ENCODE measurements at regions of chr7 and their contacts with region 1.

Region 1: DNA sequence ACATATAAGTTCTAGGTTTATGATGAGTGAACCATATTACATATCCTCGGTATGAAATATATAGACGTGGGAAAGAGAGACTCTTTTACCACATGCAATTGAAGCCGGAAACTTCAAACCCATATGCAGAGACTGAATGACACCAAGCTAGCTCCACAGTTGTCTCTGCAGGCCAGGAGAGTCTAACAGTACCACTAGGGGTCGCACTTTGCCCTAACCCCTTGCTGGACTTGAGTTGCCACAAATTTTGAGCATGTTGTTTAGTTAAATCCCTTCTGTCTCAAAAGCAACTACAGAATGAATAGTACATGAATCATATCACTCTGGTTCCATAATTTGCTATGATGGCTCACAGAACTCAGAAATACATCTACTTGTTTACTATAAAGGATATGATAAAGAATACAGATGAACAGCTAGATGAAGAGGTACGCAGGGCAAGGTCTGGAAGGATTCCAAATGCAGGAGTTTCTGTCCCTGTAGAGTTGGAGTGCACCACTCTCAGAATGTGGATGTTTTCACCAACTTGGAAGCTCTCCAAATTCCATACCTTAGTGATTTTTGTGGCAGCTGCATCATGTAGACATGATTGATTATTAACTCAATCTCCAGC is 112.4 kb upstream of the YAE1 start:
- DNase-seq: peak; percentile 27 to 73
- ATAC-seq: peak; percentile 65 to 80 (median 67)
- H3K4me3 ChIP-seq: no peak overlapping the region
- H3K4me3 Mint-ChIP-seq: no peak overlapping the region
- H3K27ac ChIP-seq: no peak overlapping the region
- H3K27ac Mint-ChIP-seq: no peak overlapping the region
- H3K4me1 ChIP-seq: no peaks in the 10 kb centered on the region
- H3K4me1 Mint-ChIP-seq: no peaks in the 10 kb centered on the region
- H3K27me3 ChIP-seq: no peaks in the 10 kb centered on the region
- H3K27me3 Mint-ChIP-seq: peaks cover 4 to 10% of the 10 kb centered on the region in 2 donors
- CTCF ChIP-seq: peak; percentile 69

Region 2: GRCh38 chr7:39517240-39517639 is 63.4 kb after region 1 on chr7:
- intact Hi-C with region 1: loop called (anchors 1 kb)
- DNase-seq: no peak
- ATAC-seq: no peak
- H3K4me3 ChIP-seq: no peak overlapping the region
- H3K4me3 Mint-ChIP-seq: no peak overlapping the region
- H3K27ac ChIP-seq: no peak overlapping the region
- H3K27ac Mint-ChIP-seq: no peak overlapping the region
- H3K4me1 ChIP-seq: no peaks in the 10 kb centered on the region
- H3K4me1 Mint-ChIP-seq: peaks cover 0 to 5% of the 10 kb centered on the region in 2 donors
- H3K27me3 ChIP-seq: no peaks in the 10 kb centered on the region
- H3K27me3 Mint-ChIP-seq: no peaks in the 10 kb centered on the region
- CTCF ChIP-seq: no peak

Region 3: DNA sequence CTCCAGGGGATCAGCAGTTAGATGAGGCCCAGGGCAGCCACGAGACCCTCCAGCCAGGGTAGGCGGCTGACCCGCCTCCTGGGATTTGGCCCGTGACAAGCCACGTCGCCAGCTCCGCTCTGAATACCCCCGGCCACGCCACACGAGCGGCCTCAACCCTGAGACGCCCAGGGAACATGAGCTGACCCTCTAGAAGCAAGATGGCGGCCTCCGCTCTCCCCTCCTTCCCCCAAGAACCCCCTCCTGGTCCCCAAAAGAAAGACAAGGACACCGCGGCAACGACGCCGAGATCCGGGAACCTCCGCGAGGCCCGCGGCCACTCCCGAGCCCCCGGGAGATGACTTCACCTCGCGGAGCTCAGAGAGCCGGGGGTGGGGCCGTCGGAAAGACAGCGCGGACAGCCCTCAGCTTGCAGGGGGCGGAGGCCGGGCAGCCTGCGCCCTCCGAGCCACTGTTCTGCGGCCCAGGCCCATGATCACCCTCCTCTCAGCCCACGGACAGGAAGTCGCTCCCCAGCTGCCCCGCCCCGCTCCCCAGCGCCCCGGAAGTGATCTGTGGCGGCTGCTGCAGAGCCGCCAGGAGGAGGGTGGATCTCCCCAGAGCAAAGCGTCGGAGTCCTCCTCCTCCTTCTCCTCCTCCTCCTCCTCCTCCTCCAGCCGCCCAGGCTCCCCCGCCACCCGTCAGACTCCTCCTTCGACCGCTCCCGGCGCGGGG is 169.3 kb after region 1 on chr7 and contains the start of gene RALA:
- intact Hi-C with region 1: no loop called
- DNase-seq: peak; percentile 85 to 92
- ATAC-seq: peak; percentile 95 to 98 (median 96)
- H3K4me3 ChIP-seq: peak within 1 kb of the TSS; percentile 79
- H3K4me3 Mint-ChIP-seq: peak within 1 kb of the TSS; percentile 100
- H3K27ac ChIP-seq: peak within 1 kb of the TSS; percentile 91
- H3K27ac Mint-ChIP-seq: peak within 1 kb of the TSS; percentile 87 to 91
- H3K4me1 ChIP-seq: peaks cover 18% of the 10 kb centered on the region
- H3K4me1 Mint-ChIP-seq: peaks cover 41 to 43% of the 10 kb centered on the region in 2 donors
- H3K27me3 ChIP-seq: no peaks in the 10 kb centered on the region
- H3K27me3 Mint-ChIP-seq: no peaks in the 10 kb centered on the region
- CTCF ChIP-seq: no peak
- total RNA-seq, gene RALA: 10.2 to 22.0 (median 16.8) TPM

Measured in natural killer cell (primary cell).